Left ventricle myocardium inferior (tissue), 1 donor: ENCODE measurements at regions of chr1 and their contacts with region 1.

Region 1: DNA sequence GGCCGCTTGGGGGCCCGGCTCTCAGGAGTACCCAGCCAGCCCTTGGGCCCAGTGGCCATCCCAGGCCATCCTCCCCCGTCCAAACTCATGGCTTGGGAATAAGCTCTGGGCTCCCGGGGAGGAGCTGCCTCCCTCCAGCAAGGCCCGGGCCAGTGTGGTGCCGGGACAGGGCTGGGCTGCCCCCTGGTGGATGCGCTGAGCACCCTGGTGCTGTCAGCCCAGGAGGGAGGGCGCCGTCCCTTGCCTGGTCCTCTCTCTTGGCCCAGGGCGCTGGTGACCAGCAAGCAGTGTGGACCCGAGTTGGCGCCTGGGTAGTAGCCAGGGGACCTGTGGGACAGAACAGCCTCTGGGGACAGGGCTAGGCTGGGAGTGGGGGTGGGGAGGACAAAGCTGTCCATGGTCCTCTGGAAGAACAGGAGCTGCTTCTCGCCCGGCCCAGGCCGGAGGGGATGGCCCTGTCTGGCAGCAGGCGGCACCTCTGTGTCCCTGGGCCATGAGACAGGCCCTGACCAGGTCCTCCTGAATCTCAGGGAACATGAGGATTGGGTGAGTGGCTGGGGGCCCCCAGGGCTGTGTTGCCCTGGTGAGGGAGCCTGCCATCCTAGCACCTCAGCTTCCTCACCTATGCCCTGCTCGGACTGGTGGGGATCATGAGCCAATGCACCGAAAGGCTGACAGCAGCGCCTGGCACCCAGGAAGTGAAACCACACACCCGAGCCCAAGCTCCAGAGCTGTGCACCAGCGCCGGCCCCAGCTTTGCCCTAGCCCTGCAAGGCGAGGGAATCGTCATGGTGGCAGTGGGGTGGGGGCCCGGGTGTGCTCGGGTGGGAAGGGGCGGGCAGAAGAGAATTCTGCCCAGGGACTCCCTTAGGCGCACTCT is 9.4 kb downstream of the MORN1 start:
- DNase-seq: peak; percentile 83
- H3K4me3 ChIP-seq: no peak overlapping the region
- H3K27ac ChIP-seq: peak overlapping the region; percentile 27
- H3K4me1 ChIP-seq: peaks cover 13% of the 10 kb centered on the region
- H3K27me3 ChIP-seq: no peaks in the 10 kb centered on the region
- CTCF ChIP-seq: peak; percentile 97

Region 2: DNA sequence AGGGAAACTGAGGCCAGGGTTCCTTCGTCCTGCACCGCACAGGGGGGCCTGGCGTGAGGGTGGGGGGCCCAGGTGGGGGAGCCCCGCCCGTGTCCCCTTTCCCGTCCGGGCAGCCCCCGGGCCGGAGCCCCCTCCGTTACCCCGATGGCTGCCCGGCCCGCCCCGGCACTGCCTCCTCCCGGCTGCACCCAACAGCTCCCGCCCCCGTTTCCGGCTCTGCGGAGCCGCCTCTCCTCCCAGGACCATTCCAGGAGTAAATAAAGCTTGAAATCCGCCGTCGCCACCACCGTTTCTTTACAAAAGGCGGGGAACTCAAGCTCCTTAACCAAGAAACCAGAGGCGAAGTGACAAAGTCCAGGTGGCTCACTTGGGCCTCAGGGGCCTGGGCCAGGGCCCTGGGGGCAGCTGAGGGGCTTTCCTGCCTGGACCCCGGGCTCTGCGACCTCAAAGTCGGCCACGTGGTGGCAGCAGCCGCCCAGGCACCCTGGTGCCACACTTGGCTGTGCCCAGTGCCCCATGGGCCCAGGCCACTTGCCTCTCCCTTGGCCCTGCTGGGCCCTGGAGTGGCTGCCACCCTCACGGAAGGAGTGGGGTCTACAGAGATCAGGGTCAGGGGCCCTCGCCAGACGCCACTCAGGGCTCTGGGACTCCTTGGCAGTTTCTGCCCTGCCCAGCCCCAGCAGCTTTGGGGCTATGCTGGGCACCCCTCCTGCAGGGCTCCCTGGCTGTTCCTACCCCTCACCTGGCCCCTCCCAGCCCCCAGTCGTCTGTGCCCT is 186.9 kb before region 1 on chr1:
- intact Hi-C with region 1: loop called (anchors 5 kb)
- DNase-seq: peak; percentile 91
- H3K4me3 ChIP-seq: peak overlapping the region; percentile 86
- H3K27ac ChIP-seq: peak overlapping the region; percentile 99
- H3K4me1 ChIP-seq: peaks cover 73% of the 10 kb centered on the region
- H3K27me3 ChIP-seq: no peaks in the 10 kb centered on the region
- CTCF ChIP-seq: peak; percentile 96